ENCODE measurements at regions of chr12 and their contacts with region 1.

Region 1: GRCh38 chr12:27179400-27180214 is 64.5 kb upstream of the STK38L start:
- DNase-seq: no peak
- ATAC-seq: peak; percentile 91
- H3K4me3 ChIP-seq: no peak overlapping the region
- H3K27ac ChIP-seq: peak overlapping the region; percentile 52 to 98
- H3K4me1 ChIP-seq: peaks cover 2 to 7% of the 10 kb centered on the region in 2 donors
- H3K27me3 ChIP-seq: no peaks in the 10 kb centered on the region

Region 2: DNA sequence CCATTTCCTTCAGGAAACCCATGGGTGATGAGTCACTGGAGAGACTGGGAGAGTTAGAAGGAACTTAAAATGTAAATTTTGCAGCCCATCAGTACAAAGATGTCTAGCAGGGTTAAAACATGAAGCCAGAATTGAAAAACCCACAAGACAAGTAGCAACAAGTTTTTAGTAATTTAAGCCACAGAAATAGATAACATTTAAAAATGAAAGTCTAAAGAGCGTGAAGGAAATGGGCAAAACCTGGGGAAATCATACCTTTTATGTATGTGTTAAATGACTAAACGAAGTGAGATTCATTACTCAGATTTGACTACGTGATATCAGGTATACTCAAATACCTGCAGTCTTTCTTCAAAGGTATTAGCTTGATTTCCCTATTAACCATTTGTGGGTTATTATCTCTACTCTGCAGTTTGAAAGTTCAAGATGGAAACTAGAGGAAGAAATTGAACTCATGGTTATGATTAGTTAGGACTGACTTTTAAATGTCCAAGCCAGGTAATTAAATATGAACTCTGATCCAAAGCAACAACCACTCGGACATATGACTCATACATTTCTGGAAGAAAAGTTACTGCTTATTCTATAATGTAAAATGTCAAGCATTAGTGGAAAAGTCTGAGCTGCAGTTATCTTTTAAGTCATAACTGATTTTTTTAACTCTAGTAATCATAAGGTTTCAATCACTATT is 430.7 kb before region 1 on chr12:
- intact Hi-C with region 1: no loop called
- DNase-seq: no peak
- ATAC-seq: no peak
- H3K4me3 ChIP-seq: no peak overlapping the region
- H3K27ac ChIP-seq: no peak overlapping the region
- H3K4me1 ChIP-seq: no peaks in the 10 kb centered on the region
- H3K27me3 ChIP-seq: no peaks in the 10 kb centered on the region

Region 3: DNA sequence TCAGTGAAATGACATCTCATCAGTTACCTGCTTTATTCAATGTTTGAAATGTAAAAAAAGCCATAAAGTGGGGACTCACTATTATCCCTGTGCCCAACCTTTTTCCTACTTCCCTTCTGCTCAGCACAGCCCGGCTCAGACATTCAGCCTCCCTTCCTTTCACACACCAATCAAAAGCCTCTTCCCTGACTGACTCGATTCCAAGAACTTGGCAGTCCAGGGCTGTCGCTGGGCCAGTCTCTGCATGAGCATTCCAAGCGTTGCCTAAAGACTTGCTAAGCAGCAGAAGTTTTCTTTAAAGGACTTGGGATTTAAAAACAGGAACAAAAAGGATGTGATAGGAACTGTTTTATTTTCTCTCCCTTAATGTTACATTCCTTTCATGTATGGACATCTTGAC is 369.3 kb before region 1 on chr12:
- intact Hi-C with region 1: no loop called
- DNase-seq: peak; percentile 86 to 87
- ATAC-seq: peak; percentile 88
- H3K4me3 ChIP-seq: no peak overlapping the region
- H3K27ac ChIP-seq: peak overlapping the region; percentile 40 to 76
- H3K4me1 ChIP-seq: no peaks in the 10 kb centered on the region
- H3K27me3 ChIP-seq: no peaks in the 10 kb centered on the region

Region 4: DNA sequence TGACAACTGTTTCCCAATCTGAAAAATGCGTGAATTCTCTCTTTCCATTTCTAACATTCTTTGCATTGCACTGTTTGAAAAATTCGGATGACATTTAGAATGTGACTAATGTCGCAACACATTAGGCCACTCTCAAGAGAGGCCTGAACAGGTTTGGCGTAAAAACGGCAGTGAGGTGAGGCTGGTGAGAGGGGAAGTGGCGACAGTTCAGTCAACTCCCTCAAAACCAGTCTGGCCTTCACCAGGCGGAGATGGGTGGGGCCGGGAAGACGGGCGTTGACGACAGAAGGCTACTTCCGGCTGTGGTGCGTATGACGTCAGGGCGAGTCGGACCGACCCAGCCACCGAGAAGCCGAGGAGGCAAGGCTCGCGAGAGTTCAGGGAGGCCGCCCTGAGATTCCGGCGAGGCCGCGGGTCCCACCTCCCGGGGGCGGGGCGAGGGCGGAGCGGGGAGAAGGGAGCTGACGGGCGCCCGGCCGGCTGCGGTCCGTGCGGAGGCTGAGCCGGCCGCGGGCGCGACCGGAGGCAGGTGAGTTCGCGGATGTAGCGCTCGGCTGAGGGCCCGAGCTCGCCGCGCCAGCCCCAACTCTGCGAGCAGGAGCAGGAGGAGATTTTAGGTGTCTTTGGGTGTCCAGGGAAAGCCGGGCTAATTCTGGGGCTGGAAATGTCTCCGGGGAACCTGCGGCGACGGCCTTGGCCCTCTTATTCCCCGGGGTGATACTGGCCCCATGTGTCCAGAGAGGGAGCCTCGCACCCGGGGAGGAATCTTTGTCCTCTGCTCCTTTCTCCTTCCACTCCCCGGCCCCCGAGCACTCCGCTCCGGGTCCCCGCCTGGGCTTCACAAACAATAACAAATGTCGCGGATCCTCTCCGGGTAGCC is 64.4 kb after region 1 on chr12 and contains the start of gene STK38L:
- intact Hi-C with region 1: loop called in 1 of 2 experiments (anchors 2 kb)
- DNase-seq: peak; percentile 99
- ATAC-seq: peak; percentile 99
- H3K4me3 ChIP-seq: peak within 1 kb of the TSS; percentile 36 to 79
- H3K27ac ChIP-seq: peak within 1 kb of the TSS; percentile 83 to 94
- H3K4me1 ChIP-seq: peaks cover 0 to 7% of the 10 kb centered on the region in 2 donors
- H3K27me3 ChIP-seq: no peaks in the 10 kb centered on the region
- total RNA-seq, gene STK38L: 218 to 414 TPM

Region 5: DNA sequence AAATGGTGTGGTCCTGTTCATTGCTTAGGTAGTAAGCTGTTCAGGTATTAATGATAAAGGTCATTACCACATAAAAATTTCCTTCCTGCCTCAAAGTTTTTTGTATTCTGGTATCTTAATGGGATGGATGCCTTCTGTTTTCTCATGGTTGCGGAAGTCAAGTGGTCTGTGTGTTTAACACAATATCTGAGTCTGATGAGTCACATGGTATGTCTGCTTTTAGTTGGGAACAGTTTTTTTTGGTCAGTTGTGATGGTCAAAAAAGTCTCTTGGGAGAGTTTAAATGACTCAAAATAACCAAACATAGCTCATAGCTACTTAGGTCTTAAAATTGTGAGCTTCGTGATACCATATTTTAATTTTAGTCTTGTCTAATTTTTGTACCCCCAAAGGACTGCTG is 105.1 kb after region 1 on chr12:
- intact Hi-C with region 1: loop called in 1 of 2 experiments (anchors 5 kb)
- DNase-seq: no peak
- ATAC-seq: peak; percentile 81
- H3K4me3 ChIP-seq: no peak overlapping the region
- H3K27ac ChIP-seq: peak overlapping the region in 1 of 2 donors; percentile 82
- H3K4me1 ChIP-seq: peaks cover 3 to 15% of the 10 kb centered on the region in 2 donors
- H3K27me3 ChIP-seq: no peaks in the 10 kb centered on the region

Region 6: DNA sequence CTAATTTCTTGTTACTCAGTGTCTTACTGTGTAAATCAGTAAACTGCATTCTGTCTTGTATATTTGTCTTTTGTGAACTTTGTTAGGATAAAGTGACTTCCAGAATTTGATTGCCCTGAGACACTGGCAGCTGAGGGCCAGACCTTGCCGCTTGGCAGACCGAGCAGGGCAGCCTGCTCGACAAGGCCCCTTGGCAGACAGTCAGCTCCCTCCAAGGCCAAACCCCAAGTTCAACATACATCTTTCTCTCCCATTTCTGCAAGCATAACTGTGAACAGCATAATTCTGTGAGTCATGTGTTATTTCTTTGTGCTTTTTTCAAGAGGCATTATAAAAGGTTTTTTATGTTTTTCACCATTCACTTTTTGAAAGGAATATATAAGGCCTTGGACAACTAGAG is 113.9 kb after region 1 on chr12:
- intact Hi-C with region 1: loop called (anchors 5 kb)
- DNase-seq: no peak
- ATAC-seq: peak; percentile 52
- H3K4me3 ChIP-seq: no peak overlapping the region
- H3K27ac ChIP-seq: peak overlapping the region; percentile 54 to 59
- H3K4me1 ChIP-seq: peaks cover 14 to 26% of the 10 kb centered on the region in 2 donors
- H3K27me3 ChIP-seq: no peaks in the 10 kb centered on the region

Measured in aorta (tissue), 5 donors.